Esophagus muscularis mucosa (tissue), 4 donors: ENCODE measurements at regions of chr9 and their contacts with region 1.

Region 1: DNA sequence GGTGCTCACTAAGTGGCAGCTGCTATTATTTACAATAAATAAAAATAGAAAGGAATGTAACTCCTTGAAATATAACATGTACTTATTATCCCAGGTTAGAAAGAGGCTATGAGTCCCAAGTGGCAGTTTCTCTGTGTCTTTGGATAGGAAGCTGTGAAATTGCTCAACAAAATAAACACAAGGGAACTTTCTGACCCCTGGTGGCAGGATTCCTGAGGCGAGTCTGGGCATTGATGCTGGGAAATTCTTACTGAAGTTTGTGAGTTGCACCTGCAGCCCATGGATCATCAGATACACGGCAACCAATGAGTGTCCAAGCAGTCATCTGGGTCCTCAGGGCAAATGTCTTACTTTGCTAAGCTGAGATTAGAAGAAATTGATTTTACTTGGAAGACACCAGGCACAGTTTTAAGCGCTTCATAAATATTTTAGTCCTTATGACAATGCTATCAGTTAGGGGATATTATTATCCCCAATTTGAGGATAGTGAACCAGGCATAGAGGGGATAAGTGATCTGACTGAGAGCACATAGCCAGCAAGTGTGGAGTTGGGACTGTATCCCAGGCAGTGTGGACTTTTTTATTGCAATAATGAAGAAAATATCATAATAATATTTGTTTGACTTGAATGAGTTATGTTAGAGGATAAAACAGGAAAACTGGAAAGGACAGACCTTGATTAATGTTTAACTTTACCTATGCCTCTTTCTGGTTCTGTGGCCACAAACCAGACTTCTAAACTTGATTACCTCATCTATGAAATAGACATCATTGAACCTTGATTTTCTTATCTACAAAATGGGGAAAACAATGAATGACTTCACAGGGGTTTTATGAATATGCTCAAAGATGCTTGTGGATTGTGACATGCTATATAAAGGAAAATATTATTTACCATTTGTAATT is 265.5 kb upstream of the ADAMTSL1 start:
- DNase-seq: no peak
- H3K4me3 ChIP-seq: no peak overlapping the region
- H3K27ac ChIP-seq: peak overlapping the region; percentile 35 to 55 (median 50)
- H3K4me1 ChIP-seq: peaks cover 0 to 62% (median 38%) of the 10 kb centered on the region in 4 donors
- H3K27me3 ChIP-seq: no peaks in the 10 kb centered on the region
- CTCF ChIP-seq: peak; percentile 66 to 72 (median 71)
- EP300 ChIP-seq: no peak
- POLR2A ChIP-seq: no peak

Region 2: GRCh38 chr9:17812556-17812955 is 395.9 kb before region 1 on chr9:
- intact Hi-C with region 1: loop called (anchors 1 kb)
- DNase-seq: no peak
- H3K4me3 ChIP-seq: no peak overlapping the region
- H3K27ac ChIP-seq: no peak overlapping the region
- H3K4me1 ChIP-seq: peaks cover 6 to 21% (median 18%) of the 10 kb centered on the region in 4 donors
- H3K27me3 ChIP-seq: no peaks in the 10 kb centered on the region
- CTCF ChIP-seq: no peak
- EP300 ChIP-seq: no peak
- POLR2A ChIP-seq: no peak

Region 3: GRCh38 chr9:17906176-17906840 is 302.1 kb before region 1 on chr9:
- intact Hi-C with region 1: loop called (anchors 5 kb)
- DNase-seq: no peak
- H3K4me3 ChIP-seq: peak overlapping the region; percentile 73 to 83 (median 80)
- H3K27ac ChIP-seq: peak overlapping the region; percentile 91 to 96 (median 92)
- H3K4me1 ChIP-seq: peaks cover 5 to 32% (median 19%) of the 10 kb centered on the region in 4 donors
- H3K27me3 ChIP-seq: peaks cover 0 to 18% (median 0%) of the 10 kb centered on the region in 4 donors
- CTCF ChIP-seq: peak in 1 of 3 experiments; percentile 9
- EP300 ChIP-seq: no peak
- POLR2A ChIP-seq: no peak